Ovary (tissue), 10 donors: ENCODE measurements at regions of chr17 and their contacts with region 1.

Region 1: DNA sequence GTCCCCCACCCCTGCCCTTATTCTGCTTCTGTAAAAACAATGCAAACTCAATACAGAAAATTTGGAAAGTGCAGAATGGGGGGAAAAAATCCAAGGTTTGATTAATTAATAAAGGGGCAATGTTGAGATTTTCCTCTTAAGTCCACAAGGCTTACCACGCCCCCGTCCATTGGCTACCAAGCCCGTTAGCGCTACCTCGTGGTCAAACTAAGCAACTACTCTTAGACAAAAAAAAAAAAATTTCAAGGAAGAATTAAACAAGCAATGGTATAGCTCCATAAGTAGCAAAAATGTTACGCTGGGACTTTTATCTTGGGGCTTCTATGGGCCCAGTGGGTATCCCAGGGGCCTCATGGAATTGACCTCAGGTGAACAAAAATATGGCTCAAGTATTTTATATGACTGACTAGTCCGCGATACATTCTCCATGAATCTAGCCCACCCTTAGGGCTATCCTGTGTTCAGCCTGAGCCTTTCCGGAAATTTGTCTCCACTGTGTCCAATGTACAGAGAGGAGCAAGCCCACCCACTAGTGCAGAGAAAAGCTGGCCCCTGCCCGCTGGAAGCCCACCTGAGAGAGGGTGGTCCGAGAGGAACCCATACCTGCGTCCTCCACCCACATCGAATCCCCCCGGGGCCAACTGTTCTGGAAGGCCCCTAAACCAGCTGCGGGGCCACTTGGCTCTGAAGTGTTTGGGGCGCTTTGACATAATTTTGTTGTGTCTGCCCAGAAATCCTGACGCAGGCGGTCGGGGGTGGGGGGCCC is 19.1 kb upstream of the TEX2 start:
- DNase-seq: peak; percentile 49 to 66 (median 57)
- H3K4me3 ChIP-seq: no peak overlapping the region
- H3K27ac ChIP-seq: no peak overlapping the region
- H3K4me1 ChIP-seq: peaks cover 2% of the 10 kb centered on the region
- H3K27me3 ChIP-seq: no peaks in the 10 kb centered on the region
- CTCF ChIP-seq: peak; percentile 59 to 64 (median 59)
- EP300 ChIP-seq: no peak
- POLR2A ChIP-seq: no peak

Region 2: GRCh38 chr17:63919311-63919723 is 362.8 kb before region 1 on chr17:
- intact Hi-C with region 1: loop called in 2 of 4 experiments (anchors 10 kb)
- DNase-seq: peak; percentile 51 to 65 (median 63)
- H3K4me3 ChIP-seq: no peak overlapping the region
- H3K27ac ChIP-seq: no peak overlapping the region
- H3K4me1 ChIP-seq: peaks cover 2% of the 10 kb centered on the region
- H3K27me3 ChIP-seq: no peaks in the 10 kb centered on the region
- CTCF ChIP-seq: peak; percentile 67 to 87 (median 81)
- EP300 ChIP-seq: no peak
- POLR2A ChIP-seq: no peak

Region 3: DNA sequence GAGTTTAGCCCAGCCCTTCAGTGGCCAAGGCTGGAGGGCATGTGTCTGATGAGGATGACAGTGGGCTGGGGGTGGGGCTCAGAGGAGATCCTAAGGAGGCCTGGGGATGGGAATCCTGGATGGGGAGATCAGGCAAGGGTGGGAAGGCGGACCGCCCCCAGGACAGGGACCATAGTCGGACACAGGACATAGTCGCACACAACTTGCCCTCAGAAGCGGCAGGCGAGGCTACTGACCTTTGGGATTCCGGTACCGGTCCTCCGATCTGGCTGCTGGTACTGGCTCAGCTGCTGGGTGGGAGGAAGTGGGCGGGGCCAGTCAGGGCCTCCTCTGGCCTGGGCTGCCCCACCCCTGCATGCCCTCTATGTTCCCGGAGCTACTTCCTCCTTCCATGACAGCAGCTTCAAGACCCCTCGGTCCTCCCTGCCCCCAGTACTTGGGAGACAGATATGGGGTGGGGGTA is 351.0 kb before region 1 on chr17:
- intact Hi-C with region 1: loop called in 1 of 4 experiments (anchors 10 kb)
- DNase-seq: peak in 2 of 5 donors; percentile 42 to 58
- H3K4me3 ChIP-seq: no peak overlapping the region
- H3K27ac ChIP-seq: no peak overlapping the region
- H3K4me1 ChIP-seq: no peaks in the 10 kb centered on the region
- H3K27me3 ChIP-seq: no peaks in the 10 kb centered on the region
- CTCF ChIP-seq: no peak
- EP300 ChIP-seq: no peak
- POLR2A ChIP-seq: no peak

Region 4: GRCh38 chr17:64025732-64026294 is 256.3 kb before region 1 on chr17:
- intact Hi-C with region 1: loop called in 1 of 4 experiments (anchors 5 kb)
- DNase-seq: peak; percentile 58 to 83 (median 72)
- H3K4me3 ChIP-seq: no peak overlapping the region
- H3K27ac ChIP-seq: no peak overlapping the region
- H3K4me1 ChIP-seq: peaks cover 7% of the 10 kb centered on the region
- H3K27me3 ChIP-seq: no peaks in the 10 kb centered on the region
- CTCF ChIP-seq: peak; percentile 64 to 73 (median 66)
- EP300 ChIP-seq: no peak
- POLR2A ChIP-seq: no peak

Region 5: DNA sequence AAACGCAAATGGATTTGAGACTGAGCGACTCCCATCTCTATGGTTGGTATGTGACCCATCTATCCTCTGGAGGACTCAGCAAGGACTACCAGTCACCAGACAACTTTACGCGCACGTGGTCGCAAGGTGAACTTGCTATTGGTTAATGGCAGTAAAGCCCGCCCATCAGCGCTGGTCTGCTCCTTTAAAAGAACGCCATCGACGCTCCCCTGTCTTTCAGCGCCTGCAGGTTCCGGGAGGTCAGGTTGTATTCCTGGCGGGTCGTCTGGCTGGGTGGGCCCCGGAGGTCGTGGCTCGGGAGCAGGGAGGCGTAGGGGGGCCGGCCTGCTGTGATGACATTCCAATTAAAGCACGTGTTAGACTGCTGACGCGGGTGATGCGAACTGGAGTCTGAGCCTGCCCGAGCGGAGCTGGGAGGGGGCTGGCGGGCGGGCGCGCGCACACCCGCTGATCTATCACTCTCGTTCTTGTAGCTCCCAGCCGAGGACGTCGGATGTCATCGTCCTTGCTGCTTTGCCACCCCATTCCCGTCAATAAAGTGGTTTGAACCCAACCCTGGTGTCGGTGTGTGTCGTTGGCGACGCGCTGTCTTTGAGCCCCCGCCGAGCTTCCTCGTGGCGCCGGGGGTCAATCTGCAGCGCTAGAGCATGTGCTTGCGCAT is 136.3 kb before region 1 on chr17:
- intact Hi-C with region 1: loop called in 1 of 4 experiments (anchors 5 kb)
- DNase-seq: peak; percentile 96 to 99 (median 98)
- H3K4me3 ChIP-seq: peak overlapping the region; percentile 73
- H3K27ac ChIP-seq: peak overlapping the region; percentile 82 to 98
- H3K4me1 ChIP-seq: peaks cover 5% of the 10 kb centered on the region
- H3K27me3 ChIP-seq: no peaks in the 10 kb centered on the region
- CTCF ChIP-seq: peak in 2 of 3 donors; percentile 9 to 23
- EP300 ChIP-seq: peak; percentile 59
- POLR2A ChIP-seq: peak; percentile 97

Region 6: GRCh38 chr17:64406321-64407200 is 124.4 kb after region 1 on chr17:
- intact Hi-C with region 1: no loop called
- DNase-seq: peak in 2 of 5 donors; percentile 28 to 60
- H3K4me3 ChIP-seq: no peak overlapping the region
- H3K27ac ChIP-seq: no peak overlapping the region
- H3K4me1 ChIP-seq: peaks cover 15% of the 10 kb centered on the region
- H3K27me3 ChIP-seq: no peaks in the 10 kb centered on the region
- CTCF ChIP-seq: no peak
- EP300 ChIP-seq: no peak
- POLR2A ChIP-seq: no peak